BJ (cell line): ENCODE measurements at regions of chr16 and their contacts with region 1.

Region 1: DNA sequence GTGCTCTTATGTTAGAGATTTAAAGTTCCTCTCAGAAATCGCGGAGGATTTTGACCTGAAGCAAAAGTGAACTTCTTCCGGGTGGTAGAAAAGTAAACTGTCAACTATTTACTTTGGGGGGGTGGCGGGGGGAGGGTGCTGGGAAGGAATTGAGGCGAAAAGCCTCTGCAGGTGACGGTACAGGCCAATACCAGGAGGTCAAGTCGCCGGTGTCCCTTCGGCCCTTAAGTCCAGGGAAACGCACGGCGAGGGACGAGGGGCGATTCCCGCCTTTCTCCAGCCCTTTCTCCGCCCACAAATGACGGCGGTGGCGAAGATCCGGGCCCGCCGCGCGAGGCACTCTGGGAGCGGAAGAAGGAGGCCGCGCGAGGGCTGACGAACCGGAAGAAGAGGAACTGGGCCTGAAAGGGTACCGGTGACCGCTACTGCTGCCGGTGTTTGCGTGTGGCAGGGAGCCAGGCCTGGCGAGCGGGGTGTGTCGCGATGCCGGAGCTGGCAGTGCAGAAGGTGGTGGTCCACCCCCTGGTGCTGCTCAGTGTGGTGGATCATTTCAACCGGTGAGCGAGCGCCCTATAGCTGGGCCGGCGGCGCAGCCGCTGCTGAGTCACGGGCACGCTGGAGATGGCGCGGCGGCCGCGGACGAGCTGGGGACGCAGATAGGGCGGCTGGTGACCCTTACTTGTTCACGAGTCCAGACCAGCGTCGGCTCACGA is at the start of gene PSMD7:
- DNase-seq: peak; percentile 42
- H3K4me3 ChIP-seq: peak within 1 kb of the TSS; percentile 57
- H3K27me3 ChIP-seq: no peaks in the 10 kb centered on the region
- CTCF ChIP-seq: no peak
- polyA plus RNA-seq, gene PSMD7: 86.0 and 112 TPM in 2 replicates

Region 2: GRCh38 chr16:74183601-74184360 is 112.8 kb before region 1 on chr16:
- CTCF ChIA-PET with region 1: no interaction called
- POLR2A ChIA-PET with region 1: no interaction called
- DNase-seq: no peak
- H3K4me3 ChIP-seq: no peak overlapping the region
- H3K27me3 ChIP-seq: no peaks in the 10 kb centered on the region
- CTCF ChIP-seq: no peak

Region 3: DNA sequence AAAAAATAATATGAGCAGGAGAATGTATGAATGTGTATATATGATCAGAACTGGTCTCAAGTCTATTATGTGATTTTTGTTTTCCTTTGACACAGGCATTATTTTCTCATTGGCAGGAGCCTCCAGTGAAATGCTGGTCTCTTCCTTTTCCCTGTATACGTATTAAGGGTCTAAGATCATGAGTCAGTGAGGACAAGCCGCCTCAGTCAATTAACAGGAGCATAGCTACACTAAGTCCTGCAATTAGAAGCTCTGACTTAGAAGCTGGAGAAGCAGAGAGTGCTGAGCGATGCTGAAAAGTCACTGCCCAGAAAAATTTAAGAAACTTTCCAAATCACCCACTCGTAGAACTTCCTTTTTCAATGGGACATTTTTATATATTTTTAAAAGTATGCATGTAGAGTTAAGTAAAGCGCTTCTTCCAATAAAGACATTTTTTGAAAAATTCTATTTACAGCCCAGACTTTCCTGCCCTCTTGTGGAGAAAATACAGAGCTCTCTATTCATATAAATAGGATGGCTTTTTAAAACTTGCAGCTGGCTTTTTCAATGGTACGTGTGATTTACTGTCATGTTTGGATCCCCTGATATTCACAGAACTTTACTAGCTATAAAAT is 70.1 kb before region 1 on chr16:
- CTCF ChIA-PET with region 1: no interaction called
- POLR2A ChIA-PET with region 1: interaction called, 10 read pairs
- DNase-seq: no peak
- H3K4me3 ChIP-seq: no peak overlapping the region
- H3K27me3 ChIP-seq: no peaks in the 10 kb centered on the region
- CTCF ChIP-seq: peak; percentile 34

Region 4: DNA sequence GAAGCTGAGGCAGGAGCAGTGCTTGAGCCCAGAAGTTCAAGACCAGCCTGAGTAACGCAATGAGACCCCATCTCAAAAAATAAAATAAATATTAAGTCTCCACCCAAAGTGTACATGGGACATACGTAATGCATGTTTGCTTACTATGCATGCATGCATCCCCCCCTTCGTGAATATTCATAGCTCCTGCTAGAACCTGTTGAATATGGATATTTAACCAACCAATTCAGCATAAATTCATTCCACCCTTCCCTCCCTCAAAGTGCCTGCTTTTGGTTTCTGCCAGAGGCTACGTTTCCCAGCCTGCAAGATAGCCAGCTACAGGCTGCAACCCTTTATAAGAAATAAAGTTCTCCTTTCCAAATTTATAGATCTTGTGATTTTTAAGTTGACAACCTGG is 12.9 kb before region 1 on chr16:
- CTCF ChIA-PET with region 1: no interaction called
- POLR2A ChIA-PET with region 1: no interaction called
- DNase-seq: no peak
- H3K4me3 ChIP-seq: no peak overlapping the region
- H3K27me3 ChIP-seq: no peaks in the 10 kb centered on the region
- CTCF ChIP-seq: no peak

Region 5: DNA sequence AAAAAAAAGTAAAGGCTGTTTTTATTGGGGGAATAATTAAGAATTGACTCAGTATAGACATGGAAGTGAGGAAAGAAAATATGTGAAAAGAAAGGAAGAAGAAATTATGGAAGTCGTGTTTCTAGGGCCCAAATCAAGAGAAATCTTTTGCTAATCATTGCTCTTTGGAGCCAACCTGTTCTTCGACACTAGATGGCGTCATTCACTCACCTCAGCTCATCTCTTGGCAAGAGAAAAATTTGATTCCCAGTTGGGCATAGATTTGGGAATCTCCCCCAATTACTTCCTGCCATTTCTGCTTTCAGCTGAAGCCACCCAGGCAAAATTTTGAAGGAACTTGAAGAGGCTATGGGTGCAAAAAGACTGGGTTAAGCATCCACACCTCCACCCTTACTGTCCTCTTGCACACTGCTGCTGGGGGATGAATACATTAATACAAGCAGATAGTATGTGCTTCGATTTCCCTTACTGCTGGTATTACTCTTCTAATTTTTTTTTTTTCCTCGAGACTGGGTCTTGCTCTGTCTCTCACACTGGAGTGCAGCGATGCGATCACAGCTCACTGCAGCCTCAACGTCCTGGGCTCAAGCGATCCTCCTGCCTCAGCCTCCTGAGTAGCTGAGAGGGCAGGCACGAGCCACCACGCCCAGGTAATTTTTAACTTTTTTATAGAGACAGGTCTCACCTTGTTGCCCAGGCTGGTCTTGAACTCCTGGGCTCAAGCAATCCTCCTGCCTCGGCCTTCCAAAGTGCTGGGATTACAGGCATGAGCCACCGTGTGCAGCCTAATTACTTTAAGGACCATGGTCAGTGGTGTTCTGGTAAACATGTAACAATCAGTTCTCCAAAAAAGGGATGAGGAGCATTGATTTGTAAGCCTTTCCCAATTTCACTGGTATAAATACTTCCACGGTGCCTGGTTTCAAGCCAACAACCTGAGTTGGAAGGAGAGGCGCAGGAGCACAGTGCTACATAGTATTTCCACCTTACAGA is 13.5 kb after region 1 on chr16:
- CTCF ChIA-PET with region 1: interaction called, 11 read pairs
- POLR2A ChIA-PET with region 1: interaction called, 8 read pairs
- DNase-seq: no peak
- H3K4me3 ChIP-seq: no peak overlapping the region
- H3K27me3 ChIP-seq: no peaks in the 10 kb centered on the region
- CTCF ChIP-seq: peak; percentile 74